Spleen (tissue), 13 donors: ENCODE measurements at regions of chr11 and their contacts with region 1.

Region 1: DNA sequence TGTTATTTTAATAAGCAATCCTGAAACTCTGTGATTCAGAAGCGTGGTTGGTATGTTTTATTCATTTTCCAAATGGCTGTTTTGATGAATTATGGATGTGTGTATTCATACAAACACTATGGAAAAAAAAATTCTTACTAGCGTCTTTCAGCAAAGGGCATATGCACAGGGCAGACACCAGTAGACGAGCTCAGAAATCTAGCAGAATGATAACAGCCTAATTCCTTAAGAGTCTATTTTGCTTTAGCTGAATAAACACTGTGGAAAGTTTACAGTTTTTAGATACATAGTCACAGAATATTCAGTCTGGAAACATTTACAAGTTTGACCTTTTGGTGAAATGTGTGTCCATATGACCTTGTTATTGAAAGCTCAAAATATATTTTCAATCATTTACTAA is 418.8 kb upstream of the LUZP2 start:
- DNase-seq: no peak
- H3K4me3 ChIP-seq: no peak overlapping the region
- H3K27ac ChIP-seq: no peak overlapping the region
- H3K4me1 ChIP-seq: no peaks in the 10 kb centered on the region
- H3K27me3 ChIP-seq: no peaks in the 10 kb centered on the region
- CTCF ChIP-seq: no peak
- POLR2A ChIP-seq: no peak

Region 2: DNA sequence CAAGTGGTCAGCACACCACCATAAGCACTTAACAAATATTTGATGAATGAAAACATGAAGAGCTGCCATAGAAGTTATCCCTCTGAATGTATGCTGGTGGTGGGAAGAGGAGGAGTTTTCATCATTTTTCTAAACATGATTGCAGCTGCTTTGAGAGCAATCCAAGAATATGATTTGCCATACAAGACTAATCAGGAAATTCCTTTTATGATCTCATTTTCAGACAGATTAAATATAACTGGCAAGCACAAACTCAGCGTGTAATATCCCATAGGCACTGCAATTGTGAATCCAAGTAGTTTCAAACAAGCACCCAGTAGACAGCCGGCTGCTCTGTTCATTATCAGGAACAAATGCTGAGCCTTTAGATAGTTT is 86.9 kb before region 1 on chr11:
- intact Hi-C with region 1: loop called (anchors 10 kb)
- DNase-seq: no peak
- H3K4me3 ChIP-seq: no peak overlapping the region
- H3K27ac ChIP-seq: no peak overlapping the region
- H3K4me1 ChIP-seq: no peaks in the 10 kb centered on the region
- H3K27me3 ChIP-seq: no peaks in the 10 kb centered on the region
- CTCF ChIP-seq: no peak
- POLR2A ChIP-seq: no peak